ENCODE measurements at regions of chr13 and their contacts with region 1.

Region 1: DNA sequence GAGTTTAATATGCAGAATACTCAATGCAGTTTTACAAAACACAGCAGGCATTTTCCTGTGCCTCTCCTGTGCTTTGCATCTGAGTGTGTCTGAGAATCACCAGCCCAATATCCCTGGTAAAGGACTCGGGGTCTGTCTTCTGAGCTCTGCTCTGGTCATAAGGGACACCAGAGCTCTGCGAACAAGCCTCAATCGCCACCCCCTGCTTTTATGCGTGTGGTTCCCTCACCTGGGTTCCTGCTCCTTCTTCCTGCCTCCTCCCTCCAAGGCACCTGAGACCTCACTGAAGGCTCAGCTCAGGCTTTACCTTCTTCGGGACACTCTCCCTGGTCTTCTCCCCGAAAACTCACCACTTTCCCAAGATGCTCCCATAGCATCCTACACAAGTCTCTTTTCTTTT is 84.5 kb downstream of the EFNB2 start:
- DNase-seq: no peak

Region 2: GRCh38 chr13:106234636-106235035 is 216.4 kb before region 1 on chr13:
- intact Hi-C with region 1: loop called in 1 of 2 experiments (anchors 5 kb)
- DNase-seq: no peak

Region 3: GRCh38 chr13:106499896-106500295 is 48.9 kb after region 1 on chr13:
- intact Hi-C with region 1: no loop called
- DNase-seq: no peak

Measured in posterior vena cava (tissue), 2 donors.